Sigmoid colon (tissue), 7 donors: ENCODE measurements at regions of chrX and their contacts with region 1.

Region 1: GRCh38 chrX:75596178-75596577 is 73.3 kb upstream of the ZDHHC15 start:
- DNase-seq: no peak
- H3K4me3 ChIP-seq: no peak overlapping the region
- H3K27ac ChIP-seq: peak overlapping the region; percentile 12 to 63 (median 58)
- H3K4me1 ChIP-seq: no peaks in the 10 kb centered on the region
- H3K27me3 ChIP-seq: no peaks in the 10 kb centered on the region
- CTCF ChIP-seq: no peak
- EP300 ChIP-seq: peak in 2 of 4 donors; percentile 37 to 46
- POLR2A ChIP-seq: no peak

Region 2: DNA sequence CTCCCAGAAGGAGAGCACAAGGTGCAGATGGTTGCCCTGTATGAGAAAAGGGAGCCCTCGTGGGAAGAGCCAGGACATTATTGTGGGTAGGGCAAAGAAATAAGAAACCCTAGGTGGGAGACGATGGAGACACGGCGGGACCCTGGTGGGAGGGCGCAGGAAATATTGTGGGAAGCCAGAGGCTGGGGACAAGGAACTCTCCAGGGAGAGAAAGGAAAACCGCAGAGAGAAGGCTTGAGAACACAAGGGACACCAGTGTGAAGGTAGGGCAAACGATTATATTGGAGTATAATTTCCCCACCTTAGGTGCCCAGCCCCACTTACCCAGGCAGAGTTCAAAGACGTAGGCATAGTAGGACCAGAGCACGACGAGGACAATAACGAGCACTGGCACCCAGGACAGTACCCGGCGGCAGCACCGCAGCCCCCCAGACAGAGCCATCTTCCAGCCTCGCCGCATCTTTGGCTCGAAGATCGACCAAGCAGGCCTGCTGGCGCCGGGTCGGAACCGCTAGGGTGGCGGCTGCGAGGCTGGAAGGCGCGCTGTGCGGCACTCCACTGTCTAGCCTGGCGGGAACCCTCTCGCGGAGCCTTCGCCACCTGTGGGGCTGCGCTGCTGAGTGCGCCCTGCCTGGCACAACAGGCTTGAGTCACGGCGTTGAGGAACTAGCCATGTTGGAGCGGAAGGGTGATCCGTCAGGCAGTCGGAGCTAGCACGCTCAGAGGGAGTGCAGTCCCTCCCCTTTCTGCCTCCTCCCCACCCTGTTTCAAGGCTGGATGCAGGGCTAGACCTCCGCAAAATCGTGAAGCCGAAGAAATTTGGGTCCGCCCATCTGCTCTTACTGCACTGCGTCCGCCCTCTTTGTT is 73.4 kb before region 1 on chrX and contains the start of gene ZDHHC15:
- intact Hi-C with region 1: loop called (anchors 2 kb)
- DNase-seq: peak; percentile 83
- H3K4me3 ChIP-seq: peak within 1 kb of the TSS; percentile 39 to 56 (median 52)
- H3K27ac ChIP-seq: peak within 1 kb of the TSS; percentile 78 to 84 (median 82)
- H3K4me1 ChIP-seq: peaks cover 0 to 13% (median 0%) of the 10 kb centered on the region in 4 donors
- H3K27me3 ChIP-seq: no peaks in the 10 kb centered on the region
- CTCF ChIP-seq: no peak
- EP300 ChIP-seq: no peak
- POLR2A ChIP-seq: no peak
- total RNA-seq, gene ZDHHC15: 2.1 to 6.4 (median 3.0) TPM